PC-9 (cell line): ENCODE measurements at regions of chr11 and their contacts with region 1.

Region 1: GRCh38 chr11:111230122-111230465 is 15.4 kb upstream of the POU2AF2 start:
- DNase-seq: no peak
- H3K4me3 ChIP-seq: no peak overlapping the region; the same call in 1 of the 2 replicates
- H3K27ac ChIP-seq: no peak overlapping the region
- H3K4me1 ChIP-seq: peaks cover 5% of the 10 kb centered on the region
- H3K27me3 ChIP-seq: no peaks in the 10 kb centered on the region
- CTCF ChIP-seq: no peak

Region 2: DNA sequence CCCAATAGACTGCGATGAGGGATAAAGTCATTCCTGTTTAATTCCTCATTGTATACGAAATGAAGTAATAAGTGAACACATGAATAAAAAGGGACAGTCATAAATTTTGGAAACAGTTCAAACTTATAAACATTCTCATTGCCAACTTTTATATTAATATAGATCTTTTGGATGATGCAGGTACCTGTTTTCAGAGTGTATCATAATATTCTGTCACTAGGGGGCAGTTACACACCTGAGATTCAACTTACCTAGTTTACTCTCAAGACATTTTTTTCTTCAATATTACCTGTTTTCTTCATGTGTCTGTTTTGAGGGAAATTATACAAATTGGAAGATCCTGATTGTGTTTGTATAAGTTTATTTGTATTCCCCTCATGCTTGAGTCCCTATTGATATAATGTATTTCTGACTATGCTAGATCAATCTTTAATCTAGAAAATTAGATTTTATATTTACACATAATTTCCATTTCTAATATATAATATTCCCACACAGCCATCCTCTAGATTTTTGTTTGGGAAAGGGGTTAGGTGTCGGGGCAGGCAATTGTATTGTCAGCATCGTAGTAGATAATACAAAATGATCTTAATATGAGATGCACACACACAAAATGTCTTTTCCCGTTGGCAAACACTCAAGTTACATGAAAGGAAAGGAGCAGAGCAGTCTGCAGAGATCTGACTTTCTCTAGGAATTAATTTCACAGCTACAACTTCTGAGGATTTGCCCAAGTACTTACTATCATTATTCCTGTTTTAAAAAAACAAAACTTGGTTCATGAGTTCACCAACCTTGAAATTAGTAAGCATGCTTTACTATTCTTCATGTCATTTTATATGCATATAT is 782.0 kb before region 1 on chr11:
- CTCF ChIA-PET with region 1: no interaction called
- POLR2A ChIA-PET with region 1: no interaction called
- intact Hi-C with region 1: loop called (anchors 2 kb)
- DNase-seq: no peak
- H3K4me3 ChIP-seq: no peak overlapping the region
- H3K27ac ChIP-seq: no peak overlapping the region
- H3K4me1 ChIP-seq: no peaks in the 10 kb centered on the region
- H3K27me3 ChIP-seq: no peaks in the 10 kb centered on the region
- CTCF ChIP-seq: peak; percentile 89

Region 3: DNA sequence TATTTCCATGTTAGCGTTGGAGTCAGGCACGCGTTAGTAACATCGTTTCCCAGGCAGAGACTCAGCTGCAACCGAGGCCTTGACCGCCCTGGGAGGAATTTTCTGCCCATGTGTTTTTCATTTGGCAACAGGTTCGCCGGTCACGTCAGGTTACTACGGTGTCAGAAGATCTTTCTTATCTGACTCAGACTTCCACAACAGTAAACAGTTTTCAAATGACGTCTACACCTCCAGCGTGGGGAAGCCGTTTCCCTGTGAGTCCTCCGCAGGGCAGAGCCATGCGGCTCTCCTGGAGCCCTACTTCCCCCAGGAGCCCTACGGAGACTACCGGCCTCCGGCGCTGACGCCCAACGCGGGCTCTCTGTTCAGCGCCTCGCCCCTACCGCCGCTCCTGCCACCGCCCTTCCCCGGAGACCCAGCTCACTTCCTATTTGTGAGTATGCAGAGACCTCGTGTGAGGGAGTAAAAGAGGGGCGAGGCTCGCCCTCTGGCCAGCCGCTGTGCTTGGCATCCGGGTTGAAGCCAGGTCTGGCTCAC is 53.9 kb after region 1 on chr11:
- CTCF ChIA-PET with region 1: no interaction called
- POLR2A ChIA-PET with region 1: no interaction called
- intact Hi-C with region 1: no loop called
- DNase-seq: no peak
- H3K4me3 ChIP-seq: no peak overlapping the region
- H3K27ac ChIP-seq: no peak overlapping the region
- H3K4me1 ChIP-seq: no peaks in the 10 kb centered on the region
- H3K27me3 ChIP-seq: no peaks in the 10 kb centered on the region
- CTCF ChIP-seq: no peak